Brain microvascular endothelial cell (primary cell): ENCODE measurements at regions of chr13 and their contacts with region 1.

Region 1: DNA sequence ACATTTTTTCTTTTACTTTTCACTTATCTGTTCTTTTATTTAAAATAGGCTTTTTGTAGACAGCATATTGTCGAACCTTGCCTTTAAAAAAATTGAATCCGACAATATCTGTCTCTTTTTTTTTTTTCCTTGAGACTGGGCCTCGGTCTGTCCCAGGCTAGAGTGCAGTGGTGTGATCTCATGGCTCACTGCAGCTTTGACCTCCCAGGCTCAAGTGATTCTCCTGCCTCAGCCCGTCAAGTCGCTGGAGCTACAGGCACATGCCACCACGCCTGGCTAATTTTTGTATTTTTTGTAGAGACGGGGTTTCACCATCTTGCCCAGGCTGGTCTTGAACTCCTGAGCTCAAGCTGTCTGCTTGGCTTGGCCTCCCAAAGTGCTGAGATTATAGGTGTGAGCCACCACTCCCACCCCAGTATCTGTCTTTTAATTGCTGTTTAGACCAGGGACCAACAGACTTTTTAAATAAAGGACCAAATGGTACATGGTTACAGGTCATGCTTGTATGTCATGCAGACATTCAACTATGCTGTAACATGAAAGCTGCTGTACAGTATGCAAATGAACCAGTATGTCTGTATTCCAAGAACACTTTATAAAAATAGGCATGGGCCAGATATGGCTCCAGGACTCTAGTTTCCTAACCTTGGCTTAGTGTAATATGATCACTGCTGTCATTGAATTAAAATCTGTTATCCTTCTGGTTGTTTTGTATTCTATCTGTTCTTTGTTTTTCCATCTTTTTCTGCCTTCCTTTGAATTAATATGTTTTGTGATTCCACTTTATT is 80.3 kb downstream of the GJA3 start:
- DNase-seq: no peak
- H3K4me3 ChIP-seq: no peak overlapping the region
- H3K27ac ChIP-seq: no peak overlapping the region
- H3K27me3 ChIP-seq: no peaks in the 10 kb centered on the region
- CTCF ChIP-seq: no peak

Region 2: DNA sequence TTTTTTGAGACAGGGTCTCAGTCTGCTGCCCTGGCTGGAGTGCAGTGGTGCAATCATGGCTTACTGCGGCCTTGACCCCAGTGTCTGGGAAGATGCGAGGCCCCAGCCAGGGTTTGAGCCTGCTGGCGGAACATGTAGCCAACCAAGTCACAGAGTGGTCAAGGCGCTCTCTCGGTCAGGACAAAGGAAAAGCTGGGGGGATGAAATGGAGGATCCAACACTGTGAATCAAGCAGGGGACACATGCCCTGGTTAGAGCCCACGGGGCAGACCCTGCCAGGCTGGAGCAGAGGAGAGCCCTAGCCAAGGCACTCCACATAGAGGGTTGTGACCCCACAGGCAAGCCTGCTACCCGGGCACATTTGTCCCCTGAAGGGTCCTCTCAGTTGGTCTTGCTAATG is 909.0 kb before region 1 on chr13:
- in situ Hi-C with region 1: no loop called
- DNase-seq: no peak
- H3K4me3 ChIP-seq: no peak overlapping the region
- H3K27ac ChIP-seq: no peak overlapping the region
- H3K27me3 ChIP-seq: no peaks in the 10 kb centered on the region
- CTCF ChIP-seq: no peak

Region 3: DNA sequence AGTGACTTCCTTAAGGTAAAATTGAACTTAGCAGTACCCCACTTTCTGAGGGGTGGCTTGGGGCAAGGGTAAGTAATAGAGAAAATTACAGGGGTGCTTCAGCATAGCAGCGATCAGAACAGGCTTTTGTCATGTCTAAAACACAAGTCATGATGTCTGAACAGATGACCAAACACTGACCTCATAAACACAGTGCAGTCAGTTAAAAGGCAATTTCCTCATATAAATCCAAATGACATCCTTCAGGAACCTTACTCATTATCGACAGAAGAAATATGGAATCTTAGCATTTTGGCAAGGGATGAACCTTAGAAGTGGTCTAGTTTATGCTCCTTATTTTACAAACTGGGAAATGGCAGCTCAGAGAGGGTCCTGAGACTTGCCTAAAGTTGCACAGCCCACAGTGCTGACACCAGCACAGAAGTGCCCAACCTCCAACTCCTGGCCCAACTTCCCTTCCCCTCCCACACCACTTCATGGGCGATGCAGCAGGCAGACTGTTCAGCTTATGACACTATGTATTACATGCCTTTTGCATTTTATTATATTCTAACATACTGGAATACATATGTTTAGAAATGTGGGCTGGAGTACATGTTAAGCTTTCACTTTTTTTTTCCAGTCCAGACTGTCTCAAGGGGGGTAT is 76.7 kb after region 1 on chr13:
- in situ Hi-C with region 1: loop called (anchors 10 kb)
- DNase-seq: no peak
- H3K4me3 ChIP-seq: no peak overlapping the region
- H3K27ac ChIP-seq: no peak overlapping the region
- H3K27me3 ChIP-seq: peaks cover 38% of the 10 kb centered on the region
- CTCF ChIP-seq: no peak